Activated naive CD4-positive, alpha-beta T cell treated with anti-CD3 and anti-CD28 coated beads for 36 hours (primary cell): ENCODE measurements at regions of chr1 and their contacts with region 1.

Region 1: GRCh38 chr1:76154206-76154956 is 79.8 kb downstream of the ST6GALNAC3 start:
- DNase-seq: peak; percentile 90
- H3K4me3 Mint-ChIP-seq: peak overlapping the region; percentile 72
- H3K27ac Mint-ChIP-seq: peak overlapping the region; percentile 67
- H3K4me1 Mint-ChIP-seq: peaks cover 12% of the 10 kb centered on the region
- H3K27me3 Mint-ChIP-seq: no peaks in the 10 kb centered on the region

Region 2: DNA sequence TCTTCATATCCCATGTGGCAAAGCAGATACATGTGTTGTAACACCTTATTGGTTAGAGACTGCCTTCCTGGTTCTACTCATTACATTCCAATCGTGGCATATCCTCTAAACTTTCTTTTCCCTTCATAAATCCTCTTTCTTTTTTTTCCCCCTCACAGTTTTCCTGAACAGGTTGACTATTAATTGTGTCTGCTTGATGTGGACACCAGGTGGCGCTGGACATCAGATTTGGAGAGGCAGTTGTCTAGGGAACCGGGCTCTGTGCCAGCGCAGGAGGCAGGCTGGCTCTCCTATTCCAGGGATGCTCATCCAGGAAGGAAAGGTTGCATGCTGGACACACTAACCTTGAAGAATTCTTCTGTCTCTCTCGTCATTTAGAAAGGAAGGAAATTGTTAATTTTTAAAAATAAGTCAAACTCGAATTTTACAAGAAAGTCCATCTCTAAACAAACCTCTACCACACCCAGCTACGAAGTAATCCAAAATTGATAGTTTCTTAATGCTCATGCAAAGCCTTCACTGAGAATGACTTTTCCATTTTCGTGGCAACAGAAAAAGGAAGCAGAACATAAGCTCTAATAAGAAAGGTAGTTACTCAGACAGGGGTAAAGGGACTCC is 162.8 kb before region 1 on chr1:
- CTCF ChIA-PET with region 1: no interaction called
- intact Hi-C with region 1: loop called (anchors 1 kb)
- DNase-seq: peak; percentile 88
- H3K4me3 Mint-ChIP-seq: no peak overlapping the region
- H3K27ac Mint-ChIP-seq: no peak overlapping the region
- H3K4me1 Mint-ChIP-seq: no peaks in the 10 kb centered on the region
- H3K27me3 Mint-ChIP-seq: no peaks in the 10 kb centered on the region

Region 3: GRCh38 chr1:76285578-76286135 is 131.3 kb after region 1 on chr1:
- CTCF ChIA-PET with region 1: interaction called, 6 read pairs
- intact Hi-C with region 1: loop called (anchors 1 kb)
- DNase-seq: peak; percentile 56
- H3K4me3 Mint-ChIP-seq: no peak overlapping the region
- H3K27ac Mint-ChIP-seq: peak overlapping the region; percentile 62
- H3K4me1 Mint-ChIP-seq: peaks cover 61% of the 10 kb centered on the region
- H3K27me3 Mint-ChIP-seq: no peaks in the 10 kb centered on the region

Region 4: GRCh38 chr1:76501586-76502219 is 347.3 kb after region 1 on chr1:
- CTCF ChIA-PET with region 1: interaction called, 3 read pairs
- intact Hi-C with region 1: loop called (anchors 5 kb)
- DNase-seq: peak; percentile 11
- H3K4me3 Mint-ChIP-seq: peak overlapping the region; percentile 32
- H3K27ac Mint-ChIP-seq: no peak overlapping the region
- H3K4me1 Mint-ChIP-seq: peaks cover 16% of the 10 kb centered on the region
- H3K27me3 Mint-ChIP-seq: no peaks in the 10 kb centered on the region

Region 5: DNA sequence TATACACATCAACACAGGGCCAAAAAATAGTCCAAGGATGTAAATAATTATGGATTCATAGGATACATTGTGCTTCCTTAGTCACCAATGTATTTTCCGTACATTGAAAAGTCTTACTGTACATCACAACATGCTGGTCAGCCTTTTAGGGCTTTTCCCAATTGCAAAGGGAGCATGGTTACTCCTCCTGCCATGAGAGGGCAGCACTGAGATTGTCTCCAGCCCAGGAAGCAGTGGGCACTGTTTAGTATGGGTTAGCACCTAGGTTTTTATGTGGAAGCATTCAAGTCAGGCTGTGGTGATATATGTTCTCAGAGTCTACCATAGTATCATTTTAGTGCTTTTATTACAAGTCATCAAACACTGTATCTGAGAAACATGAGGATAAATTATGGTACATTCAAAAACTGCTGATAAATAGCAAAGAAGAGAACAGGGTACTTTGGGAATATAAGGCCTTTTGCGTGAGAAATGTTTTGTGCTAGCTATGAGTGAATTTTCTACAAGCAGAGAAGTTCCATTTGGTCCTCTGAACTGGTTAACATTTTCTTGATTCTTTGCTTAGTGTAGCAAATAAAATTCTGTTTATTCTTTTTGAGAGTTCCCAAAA is 746.9 kb after region 1 on chr1:
- CTCF ChIA-PET with region 1: no interaction called
- intact Hi-C with region 1: loop called (anchors 10 kb)
- DNase-seq: peak; percentile 57
- H3K4me3 Mint-ChIP-seq: no peak overlapping the region
- H3K27ac Mint-ChIP-seq: no peak overlapping the region
- H3K4me1 Mint-ChIP-seq: no peaks in the 10 kb centered on the region
- H3K27me3 Mint-ChIP-seq: no peaks in the 10 kb centered on the region

Region 6: DNA sequence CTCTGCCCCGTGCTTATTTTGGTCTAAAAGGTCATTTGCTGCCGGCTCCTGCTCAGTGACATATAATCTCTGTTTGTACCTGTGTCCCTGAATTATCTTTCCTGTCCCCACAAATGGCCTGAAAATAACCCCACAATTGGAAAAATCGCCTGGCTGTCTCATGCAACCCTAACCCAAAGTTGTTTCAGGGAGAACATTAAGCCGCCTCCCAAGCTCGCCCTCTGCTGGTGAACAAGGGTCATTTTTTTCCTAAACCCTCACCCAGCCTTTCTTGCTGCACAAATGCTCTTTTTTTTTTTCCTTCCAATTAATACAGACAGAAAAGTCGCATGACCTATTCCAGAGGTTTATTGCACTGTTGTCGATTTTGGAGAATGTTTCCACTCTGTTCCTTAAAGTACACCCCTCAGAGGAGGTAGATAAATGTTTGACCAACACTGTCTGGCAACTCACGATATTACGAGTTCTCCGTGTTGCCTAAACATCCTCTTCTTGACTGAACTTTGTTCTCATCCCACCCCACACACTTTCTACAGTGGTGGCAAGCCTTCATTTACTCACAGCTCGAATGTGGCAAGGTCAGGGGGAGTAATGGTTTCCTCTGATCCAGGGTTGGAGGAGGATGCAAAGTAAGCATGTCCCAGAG is 1379.4 kb after region 1 on chr1:
- CTCF ChIA-PET with region 1: interaction called, 4 read pairs
- intact Hi-C with region 1: loop called (anchors 1 kb)
- DNase-seq: peak; percentile 77
- H3K4me3 Mint-ChIP-seq: no peak overlapping the region
- H3K27ac Mint-ChIP-seq: peak overlapping the region; percentile 15
- H3K4me1 Mint-ChIP-seq: peaks cover 8% of the 10 kb centered on the region
- H3K27me3 Mint-ChIP-seq: no peaks in the 10 kb centered on the region